Vagina (tissue), 2 donors: ENCODE measurements at regions of chr6 and their contacts with region 1.

Region 1: GRCh38 chr6:169710009-169710408 is 8.1 kb downstream of the C6orf120 start:
- DNase-seq: no peak
- H3K4me3 ChIP-seq: no peak overlapping the region
- H3K27ac ChIP-seq: no peak overlapping the region
- H3K4me1 ChIP-seq: peaks cover 9% of the 10 kb centered on the region
- H3K27me3 ChIP-seq: no peaks in the 10 kb centered on the region
- CTCF ChIP-seq: no peak
- POLR2A ChIP-seq: no peak

Region 2: DNA sequence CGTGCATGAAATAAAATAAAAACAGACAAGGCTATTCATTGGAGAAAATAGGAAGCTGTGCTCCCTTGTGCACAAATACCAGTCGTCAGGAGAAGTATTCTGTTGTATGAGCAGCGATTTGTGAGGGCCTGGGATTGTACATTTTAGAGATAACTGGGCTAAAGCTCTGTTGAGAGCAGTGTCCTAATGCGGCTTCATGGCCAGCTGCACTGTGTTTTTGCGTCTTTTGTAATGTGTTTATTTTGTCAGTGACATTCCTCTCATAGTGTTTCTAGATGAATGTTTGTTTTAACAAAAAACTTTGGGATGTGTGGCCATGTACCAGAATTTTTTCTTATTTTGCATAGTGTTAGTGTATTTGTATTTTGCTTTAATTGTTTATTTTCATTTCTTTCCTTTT is 56.2 kb after region 1 on chr6:
- intact Hi-C with region 1: loop called (anchors 2 kb)
- DNase-seq: no peak
- H3K4me3 ChIP-seq: no peak overlapping the region
- H3K27ac ChIP-seq: no peak overlapping the region
- H3K4me1 ChIP-seq: no peaks in the 10 kb centered on the region
- H3K27me3 ChIP-seq: no peaks in the 10 kb centered on the region
- CTCF ChIP-seq: no peak
- POLR2A ChIP-seq: no peak